Dorsolateral prefrontal cortex (tissue), 120 donors: ENCODE measurements at regions of chr17 and their contacts with region 1.

Region 1: GRCh38 chr17:5198472-5198871 is 6.8 kb upstream of the ZNF594 start:
- DNase-seq: no peak
- H3K4me3 ChIP-seq: no peak overlapping the region
- H3K27ac ChIP-seq: no peak overlapping the region
- H3K27me3 ChIP-seq: no peaks in the 10 kb centered on the region
- CTCF ChIP-seq: no peak

Region 2: GRCh38 chr17:5237541-5238016 is 39.1 kb after region 1 on chr17:
- intact Hi-C with region 1: loop called in 1 of 2 experiments (anchors 5 kb)
- DNase-seq: peak in 3 of 10 donors; percentile 7 to 36 (median 34)
- H3K4me3 ChIP-seq: no peak overlapping the region
- H3K27ac ChIP-seq: no peak overlapping the region
- H3K27me3 ChIP-seq: no peaks in the 10 kb centered on the region
- CTCF ChIP-seq: peak in 53 of 56 donors; percentile 21 to 59 (median 46)

Region 3: DNA sequence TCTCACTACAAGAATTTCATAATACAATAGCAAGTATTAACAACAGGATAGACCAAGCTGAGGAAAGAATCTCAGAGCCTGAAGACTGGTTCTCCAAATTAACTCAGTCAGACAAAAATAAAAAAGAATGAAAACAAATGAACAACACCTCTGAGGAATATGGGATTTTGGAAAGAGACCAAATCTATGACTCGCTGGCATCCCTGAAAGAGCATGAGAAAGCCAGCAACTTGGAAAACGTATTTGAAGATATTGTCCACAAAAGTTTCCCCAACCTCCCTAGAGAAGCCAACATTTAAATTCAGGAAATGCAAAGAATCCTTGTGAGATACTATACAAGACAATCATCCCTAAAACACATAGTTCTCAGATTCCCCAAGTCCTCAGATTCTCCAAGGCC is 365.0 kb after region 1 on chr17:
- intact Hi-C with region 1: no loop called
- DNase-seq: no peak
- H3K4me3 ChIP-seq: no peak overlapping the region
- H3K27ac ChIP-seq: no peak overlapping the region
- H3K27me3 ChIP-seq: peaks cover 0 to 5% (median 0%) of the 10 kb centered on the region in 45 donors
- CTCF ChIP-seq: no peak